Activated CD8-positive, alpha-beta T cell treated with anti-CD3 and anti-CD28 coated beads, Interleukin-2, amount 10 ng/mL, durations not matched to agents 7 days and 5 days (primary cell): ENCODE measurements at regions of chr3 and their contacts with region 1.

Region 1: DNA sequence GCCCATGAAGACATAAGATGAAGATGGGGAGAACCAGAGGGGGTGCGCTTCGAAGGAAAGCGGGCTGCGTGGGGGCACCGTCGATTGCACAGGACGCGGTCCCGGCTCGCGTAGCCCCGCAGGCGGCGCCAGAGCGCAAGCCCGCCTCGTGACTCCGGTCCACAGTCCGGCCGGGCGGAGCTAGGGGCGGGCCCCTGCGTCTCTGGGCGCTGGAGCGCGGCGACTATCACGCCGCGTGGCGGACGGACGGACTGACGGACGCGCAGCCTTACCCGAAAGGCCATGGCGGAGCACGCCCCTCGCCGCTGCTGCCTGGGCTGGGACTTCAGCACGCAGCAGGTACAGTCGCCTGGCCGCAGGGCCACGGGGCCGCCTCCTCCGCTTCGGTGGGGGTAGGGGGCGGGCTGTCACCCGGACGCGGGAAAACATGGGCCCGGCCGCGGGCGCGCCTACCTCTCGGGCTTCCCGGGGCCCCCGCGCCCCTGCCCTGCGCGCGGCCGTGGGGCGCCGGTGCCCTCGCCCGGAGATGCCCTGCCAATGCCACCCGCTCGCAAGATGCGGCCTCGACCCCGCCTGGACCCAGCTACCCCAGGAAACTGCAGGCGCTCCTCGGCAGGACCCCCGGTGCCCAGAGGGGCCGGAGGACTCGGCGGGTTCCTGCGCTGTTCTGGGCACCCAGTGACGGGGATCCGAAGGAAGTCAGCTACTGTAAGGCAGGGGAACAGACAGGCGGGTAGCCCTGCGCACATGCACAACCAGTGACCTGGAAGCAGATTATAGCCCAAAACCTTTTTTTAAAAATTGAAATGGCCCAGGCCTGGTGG is at the start of gene XYLB:
- DNase-seq: peak; percentile 86
- ATAC-seq: peak; percentile 99
- H3K4me3 Mint-ChIP-seq: peak within 1 kb of the TSS; percentile 75
- H3K27ac Mint-ChIP-seq: peak within 1 kb of the TSS; percentile 53
- H3K4me1 Mint-ChIP-seq: peaks cover 18% of the 10 kb centered on the region
- H3K27me3 Mint-ChIP-seq: peaks cover 3% of the 10 kb centered on the region
- total RNA-seq, gene XYLB: 5.3 to 6.1 TPM

Region 2: GRCh38 chr3:37652851-37653250 is 693.9 kb before region 1 on chr3:
- CTCF ChIA-PET with region 1: no interaction called
- POLR2A ChIA-PET with region 1: no interaction called
- DNase-seq: no peak
- ATAC-seq: no peak
- H3K4me3 Mint-ChIP-seq: no peak overlapping the region
- H3K27ac Mint-ChIP-seq: no peak overlapping the region
- H3K4me1 Mint-ChIP-seq: no peaks in the 10 kb centered on the region
- H3K27me3 Mint-ChIP-seq: peaks cover 6% of the 10 kb centered on the region

Region 3: GRCh38 chr3:38117748-38118420 is 228.9 kb before region 1 on chr3:
- CTCF ChIA-PET with region 1: interaction called, 37 read pairs
- POLR2A ChIA-PET with region 1: interaction called, 5 read pairs
- DNase-seq: peak; percentile 84
- ATAC-seq: peak; percentile 81
- H3K4me3 Mint-ChIP-seq: no peak overlapping the region
- H3K27ac Mint-ChIP-seq: peak overlapping the region; percentile 19
- H3K4me1 Mint-ChIP-seq: peaks cover 5% of the 10 kb centered on the region
- H3K27me3 Mint-ChIP-seq: no peaks in the 10 kb centered on the region

Region 4: DNA sequence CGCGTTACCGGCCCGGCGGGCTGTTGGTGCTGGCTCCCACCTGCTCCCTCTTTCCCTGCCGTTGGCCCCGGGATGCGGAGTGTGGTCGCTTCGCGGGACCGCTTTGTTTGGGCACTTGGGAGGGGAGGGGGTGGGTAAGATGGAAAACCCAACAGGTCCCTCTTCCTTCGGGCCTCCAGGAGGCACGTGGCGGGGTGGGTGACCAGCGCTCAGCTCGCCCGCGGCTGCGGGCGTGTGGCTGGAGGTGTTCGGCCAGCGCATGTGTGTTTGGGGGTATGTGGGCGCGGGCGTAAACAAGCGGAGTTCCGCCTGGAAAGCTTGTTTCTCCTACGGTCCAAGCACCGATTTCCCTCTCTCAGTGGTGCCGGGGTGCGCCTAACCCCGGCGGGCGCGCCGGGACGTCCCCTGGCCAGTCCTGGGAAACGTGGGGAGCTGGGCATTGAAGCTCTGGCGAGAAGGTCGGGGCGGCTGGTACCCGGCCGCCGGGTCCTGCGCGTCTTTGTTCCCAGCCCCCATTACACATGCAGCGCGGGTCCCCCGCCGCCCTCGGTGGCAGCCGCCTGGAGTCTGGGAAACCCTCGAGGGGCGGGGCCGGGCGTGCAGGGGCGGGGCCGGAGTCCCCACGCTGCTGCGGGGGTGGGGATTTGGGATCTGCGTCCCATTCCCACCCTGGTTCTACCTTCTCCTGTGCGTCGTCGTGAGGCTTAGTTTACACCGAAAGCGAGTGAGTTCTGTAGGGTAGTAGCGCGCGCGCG is 108.3 kb after region 1 on chr3:
- CTCF ChIA-PET with region 1: interaction called, 21 read pairs
- POLR2A ChIA-PET with region 1: interaction called, 4 read pairs
- DNase-seq: peak; percentile 59
- ATAC-seq: peak; percentile 49
- H3K4me3 Mint-ChIP-seq: peak overlapping the region; percentile 96
- H3K27ac Mint-ChIP-seq: peak overlapping the region; percentile 69
- H3K4me1 Mint-ChIP-seq: peaks cover 16% of the 10 kb centered on the region
- H3K27me3 Mint-ChIP-seq: no peaks in the 10 kb centered on the region

Region 5: GRCh38 chr3:38479431-38480092 is 132.8 kb after region 1 on chr3:
- CTCF ChIA-PET with region 1: interaction called, 69 read pairs
- POLR2A ChIA-PET with region 1: no interaction called
- DNase-seq: peak; percentile 59
- ATAC-seq: peak; percentile 71
- H3K4me3 Mint-ChIP-seq: no peak overlapping the region
- H3K27ac Mint-ChIP-seq: no peak overlapping the region
- H3K4me1 Mint-ChIP-seq: no peaks in the 10 kb centered on the region
- H3K27me3 Mint-ChIP-seq: no peaks in the 10 kb centered on the region

Region 6: DNA sequence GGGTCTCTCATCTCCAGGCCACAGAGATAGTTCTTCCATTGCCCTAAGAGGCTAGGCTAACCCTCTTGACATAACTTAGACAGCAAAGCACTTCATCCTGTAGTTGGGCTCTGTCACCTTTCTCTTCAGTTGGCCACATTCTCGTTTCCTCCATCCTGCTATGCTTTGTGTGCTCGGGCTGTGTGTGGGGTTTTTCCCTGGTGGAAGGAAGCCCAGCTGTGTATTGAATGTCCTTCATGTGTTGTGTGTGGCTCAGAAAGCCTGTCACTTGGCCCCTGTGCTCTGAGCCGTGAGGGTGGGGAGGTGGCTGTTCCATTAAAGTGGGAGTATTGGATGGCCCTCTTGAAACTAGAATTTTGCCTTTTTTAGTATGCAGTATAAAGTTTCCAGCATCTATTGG is 140.5 kb after region 1 on chr3:
- CTCF ChIA-PET with region 1: interaction called, 69 read pairs
- POLR2A ChIA-PET with region 1: no interaction called
- DNase-seq: no peak
- ATAC-seq: no peak
- H3K4me3 Mint-ChIP-seq: no peak overlapping the region
- H3K27ac Mint-ChIP-seq: no peak overlapping the region
- H3K4me1 Mint-ChIP-seq: peaks cover 7% of the 10 kb centered on the region
- H3K27me3 Mint-ChIP-seq: no peaks in the 10 kb centered on the region